ENCODE measurements at regions of chr5 and their contacts with region 1.

Region 1: GRCh38 chr5:94968507-94969095 is 316.3 kb downstream of the MCTP1 start:
- DNase-seq: peak; percentile 25 to 71
- ATAC-seq: peak; percentile 81 to 94; a peak in 5 of 6 replicates
- H3K4me3 ChIP-seq: no peak overlapping the region
- H3K27ac ChIP-seq: no peak overlapping the region
- H3K4me1 ChIP-seq: no peaks in the 10 kb centered on the region
- CTCF ChIP-seq: peak; percentile 87
- EP300 ChIP-seq: no peak
- POLR2A ChIP-seq: no peak
- RAD21 ChIP-seq: peak; percentile 78 to 84

Region 2: GRCh38 chr5:94707359-94707758 is 261.2 kb before region 1 on chr5:
- CTCF ChIA-PET with region 1: no interaction called
- POLR2A ChIA-PET with region 1: no interaction called
- DNase-seq: no peak
- ATAC-seq: no peak
- H3K4me3 ChIP-seq: no peak overlapping the region
- H3K27ac ChIP-seq: no peak overlapping the region
- H3K4me1 ChIP-seq: peaks cover 12% of the 10 kb centered on the region; the same call in 1 of the 3 replicates
- CTCF ChIP-seq: no peak
- EP300 ChIP-seq: no peak
- POLR2A ChIP-seq: no peak
- RAD21 ChIP-seq: no peak

Region 3: GRCh38 chr5:95261437-95262175 is 293.0 kb after region 1 on chr5:
- CTCF ChIA-PET with region 1: interaction called, 68 read pairs
- POLR2A ChIA-PET with region 1: no interaction called
- DNase-seq: peak in 1 of 2 experiments; percentile 36
- ATAC-seq: peak; percentile 75; a peak in 4 of 6 replicates
- H3K4me3 ChIP-seq: no peak overlapping the region
- H3K27ac ChIP-seq: no peak overlapping the region
- H3K4me1 ChIP-seq: no peaks in the 10 kb centered on the region
- CTCF ChIP-seq: peak; percentile 68
- EP300 ChIP-seq: no peak
- POLR2A ChIP-seq: no peak
- RAD21 ChIP-seq: peak; percentile 61 to 69